Psoas muscle (tissue), 8 donors: ENCODE measurements at regions of chr7 and their contacts with region 1.

Region 1: DNA sequence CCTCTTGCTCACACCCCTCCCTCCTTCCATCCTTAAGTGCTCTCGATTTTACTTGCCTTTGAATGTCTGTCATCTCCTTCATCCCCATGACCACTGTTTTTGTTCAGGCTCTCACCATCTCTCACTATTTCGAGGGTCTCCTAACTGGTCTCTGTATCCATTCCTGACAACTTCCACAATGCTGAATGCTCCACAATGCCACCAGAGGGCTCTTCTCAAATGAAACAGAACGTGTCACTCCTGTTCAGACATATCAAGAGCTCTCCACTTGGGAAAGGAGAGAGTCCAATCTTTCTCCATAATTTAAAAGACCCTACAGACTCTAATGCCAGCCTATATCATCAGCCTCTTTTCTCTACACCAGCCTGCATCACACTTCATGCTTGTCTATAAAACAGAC is 9.0 kb upstream of the SLC13A1 start:
- DNase-seq: no peak
- ATAC-seq: no peak
- H3K4me3 ChIP-seq: no peak overlapping the region
- H3K27ac ChIP-seq: no peak overlapping the region
- H3K4me1 ChIP-seq: no peaks in the 10 kb centered on the region
- H3K27me3 ChIP-seq: no peaks in the 10 kb centered on the region
- CTCF ChIP-seq: no peak

Region 2: GRCh38 chr7:123367484-123368122 is 158.8 kb after region 1 on chr7:
- intact Hi-C with region 1: loop called in 1 of 2 experiments (anchors 10 kb)
- DNase-seq: no peak
- ATAC-seq: no peak
- H3K4me3 ChIP-seq: no peak overlapping the region
- H3K27ac ChIP-seq: no peak overlapping the region
- H3K4me1 ChIP-seq: no peaks in the 10 kb centered on the region
- H3K27me3 ChIP-seq: no peaks in the 10 kb centered on the region
- CTCF ChIP-seq: peak; percentile 39